ENCODE measurements at regions of chr6 and their contacts with region 1.

Region 1: DNA sequence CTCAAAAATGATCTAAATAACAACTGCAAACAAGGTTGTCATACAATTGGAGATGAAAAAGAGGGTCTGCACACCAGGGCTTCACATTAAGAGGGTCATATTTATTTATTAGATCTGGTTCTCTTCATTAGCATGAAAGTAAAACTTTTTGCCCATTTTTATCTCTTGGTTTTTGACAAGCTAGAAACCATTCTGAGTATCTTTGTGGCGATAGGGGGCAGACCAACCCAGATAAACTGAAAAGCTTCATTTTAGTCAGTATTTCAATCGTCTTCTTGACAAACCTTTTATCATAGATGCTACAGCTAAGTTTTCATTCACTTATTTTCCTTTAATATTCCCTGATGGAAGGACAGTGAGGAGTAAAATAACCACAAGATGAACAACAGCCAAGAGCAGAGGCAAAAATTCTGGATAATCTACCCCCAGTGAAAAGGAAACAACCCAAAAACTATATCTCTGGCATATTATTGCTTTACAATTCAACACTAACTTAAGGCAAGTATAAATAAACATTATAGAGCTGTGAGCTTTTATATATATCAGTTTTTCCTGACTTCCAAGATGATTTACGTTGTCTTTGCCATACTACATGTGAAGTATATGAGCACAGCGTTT is 45.2 kb downstream of the THEMIS start:
- DNase-seq: no peak
- H3K4me3 ChIP-seq: no peak overlapping the region
- H3K27ac ChIP-seq: no peak overlapping the region
- H3K27me3 ChIP-seq: no peaks in the 10 kb centered on the region
- CTCF ChIP-seq: peak; percentile 73

Region 2: DNA sequence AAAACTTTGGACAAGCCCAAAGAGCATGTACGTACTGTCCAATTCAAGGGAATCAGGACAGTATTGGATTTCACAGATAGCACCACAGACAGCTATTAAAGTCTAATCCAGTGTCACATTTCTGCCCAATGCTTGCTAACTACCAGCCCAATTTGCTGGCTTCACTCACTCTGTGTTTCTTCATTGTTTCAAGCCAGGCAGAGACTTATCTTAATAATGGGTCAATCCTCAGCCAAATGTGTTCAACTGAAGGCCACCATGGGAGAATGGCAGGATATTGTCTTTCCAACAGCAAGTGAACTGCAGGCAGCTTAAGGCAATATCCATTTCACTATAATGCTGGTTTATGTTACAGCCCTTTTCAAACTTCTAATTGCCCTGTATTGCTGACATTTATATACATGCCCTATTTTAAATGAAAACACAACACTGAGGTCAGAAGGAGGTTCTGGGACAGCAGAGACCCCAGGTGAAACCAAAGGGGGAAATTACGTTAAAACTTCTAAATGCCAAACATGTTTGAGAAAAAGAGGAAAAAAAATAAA is 879.3 kb before region 1 on chr6:
- CTCF ChIA-PET with region 1: no interaction called
- POLR2A ChIA-PET with region 1: no interaction called
- DNase-seq: no peak
- H3K4me3 ChIP-seq: no peak overlapping the region
- H3K27ac ChIP-seq: no peak overlapping the region
- H3K27me3 ChIP-seq: no peaks in the 10 kb centered on the region
- CTCF ChIP-seq: no peak

Region 3: DNA sequence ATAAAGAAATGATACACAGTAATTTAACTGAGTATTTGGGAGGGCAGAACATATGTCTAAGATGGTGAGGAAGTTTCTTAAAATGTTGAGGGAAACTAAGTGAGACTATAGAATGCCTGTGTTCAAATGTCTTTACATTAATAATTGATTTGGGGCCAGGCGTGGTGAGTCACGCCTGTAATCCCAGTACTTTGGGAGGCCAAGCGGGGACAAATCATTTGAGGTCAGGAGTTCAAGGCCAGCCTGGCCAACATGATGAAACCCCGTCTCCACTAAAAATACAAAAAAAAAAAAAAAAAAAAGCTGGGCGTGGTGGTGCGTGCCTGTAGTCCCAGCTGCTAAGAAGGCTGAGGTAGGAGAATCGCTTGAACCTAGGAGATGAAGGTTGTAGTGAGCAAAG is 21.5 kb before region 1 on chr6:
- CTCF ChIA-PET with region 1: interaction called, 22 read pairs
- POLR2A ChIA-PET with region 1: no interaction called
- DNase-seq: no peak
- H3K4me3 ChIP-seq: no peak overlapping the region
- H3K27ac ChIP-seq: no peak overlapping the region
- H3K27me3 ChIP-seq: no peaks in the 10 kb centered on the region
- CTCF ChIP-seq: no peak

Region 4: DNA sequence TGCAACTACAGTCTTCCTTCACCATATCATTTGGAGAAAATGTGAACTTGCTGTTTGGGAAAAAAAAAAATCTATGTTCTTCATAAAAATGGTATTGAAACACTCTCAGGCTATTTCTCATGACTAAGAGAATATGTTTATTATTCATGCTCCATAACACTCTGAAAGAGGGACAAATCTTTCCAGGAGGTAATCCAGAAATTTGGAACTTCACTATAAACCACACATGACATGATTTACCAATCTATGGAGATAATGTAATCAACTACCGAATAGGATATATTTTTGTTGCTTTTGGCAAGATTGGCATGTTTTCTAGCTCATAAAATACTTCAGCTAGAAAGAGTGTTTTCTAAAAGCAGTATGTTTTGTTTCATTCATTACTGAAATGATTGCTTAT is 11.1 kb before region 1 on chr6:
- CTCF ChIA-PET with region 1: interaction called, 31 read pairs
- POLR2A ChIA-PET with region 1: no interaction called
- DNase-seq: no peak
- H3K4me3 ChIP-seq: no peak overlapping the region
- H3K27ac ChIP-seq: no peak overlapping the region
- H3K27me3 ChIP-seq: no peaks in the 10 kb centered on the region
- CTCF ChIP-seq: no peak

Region 5: GRCh38 chr6:127879685-127880084 is 24.0 kb after region 1 on chr6:
- CTCF ChIA-PET with region 1: interaction called, 10 read pairs
- POLR2A ChIA-PET with region 1: no interaction called
- DNase-seq: no peak
- H3K4me3 ChIP-seq: peak overlapping the region; percentile 11; the same call in 1 of the 2 replicates
- H3K27ac ChIP-seq: no peak overlapping the region
- H3K27me3 ChIP-seq: no peaks in the 10 kb centered on the region
- CTCF ChIP-seq: no peak

Region 6: GRCh38 chr6:128225610-128226009 is 370.0 kb after region 1 on chr6:
- CTCF ChIA-PET with region 1: no interaction called
- POLR2A ChIA-PET with region 1: no interaction called
- DNase-seq: no peak
- H3K4me3 ChIP-seq: no peak overlapping the region
- H3K27ac ChIP-seq: no peak overlapping the region
- H3K27me3 ChIP-seq: no peaks in the 10 kb centered on the region
- CTCF ChIP-seq: no peak

Region 7: DNA sequence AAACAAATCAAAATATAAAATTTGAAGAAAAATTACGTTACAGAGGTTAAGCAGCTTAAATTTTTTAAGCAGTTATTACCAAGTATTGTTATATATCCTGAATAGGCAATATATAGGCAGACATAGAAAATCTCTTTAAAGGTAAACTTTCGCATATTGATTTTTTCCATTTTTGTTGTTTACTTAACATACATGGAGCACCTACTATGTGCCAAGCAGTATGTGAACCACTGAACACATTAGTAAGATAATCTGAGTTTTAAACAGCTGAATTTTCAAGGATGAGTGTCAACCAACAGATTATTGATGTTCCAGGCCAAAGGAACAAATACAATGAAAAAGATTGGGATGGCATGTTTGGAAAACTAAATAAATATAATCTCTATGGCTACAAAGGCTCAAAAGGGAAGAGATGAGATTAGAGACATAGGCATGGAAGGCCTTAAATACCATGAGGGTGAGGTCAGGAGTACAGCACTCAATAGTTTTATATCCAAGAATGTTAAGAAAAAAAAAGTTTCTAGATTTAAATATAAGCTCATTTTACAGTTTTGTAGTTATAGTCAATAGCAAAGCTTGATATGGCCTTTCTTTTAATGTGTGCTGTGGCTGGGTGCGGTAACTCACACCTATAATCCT is 387.2 kb after region 1 on chr6:
- CTCF ChIA-PET with region 1: interaction called, 3 read pairs
- POLR2A ChIA-PET with region 1: interaction called, 19 read pairs
- DNase-seq: peak; percentile 11
- H3K4me3 ChIP-seq: no peak overlapping the region
- H3K27ac ChIP-seq: no peak overlapping the region
- H3K27me3 ChIP-seq: no peaks in the 10 kb centered on the region
- CTCF ChIP-seq: no peak

Region 8: GRCh38 chr6:128516514-128516898 is 660.9 kb after region 1 on chr6:
- CTCF ChIA-PET with region 1: interaction called, 15 read pairs
- POLR2A ChIA-PET with region 1: no interaction called
- DNase-seq: no peak
- H3K4me3 ChIP-seq: peak overlapping the region; percentile 25; the same call in 1 of the 2 replicates
- H3K27ac ChIP-seq: no peak overlapping the region
- H3K27me3 ChIP-seq: no peaks in the 10 kb centered on the region
- CTCF ChIP-seq: peak; percentile 42

Region 9: DNA sequence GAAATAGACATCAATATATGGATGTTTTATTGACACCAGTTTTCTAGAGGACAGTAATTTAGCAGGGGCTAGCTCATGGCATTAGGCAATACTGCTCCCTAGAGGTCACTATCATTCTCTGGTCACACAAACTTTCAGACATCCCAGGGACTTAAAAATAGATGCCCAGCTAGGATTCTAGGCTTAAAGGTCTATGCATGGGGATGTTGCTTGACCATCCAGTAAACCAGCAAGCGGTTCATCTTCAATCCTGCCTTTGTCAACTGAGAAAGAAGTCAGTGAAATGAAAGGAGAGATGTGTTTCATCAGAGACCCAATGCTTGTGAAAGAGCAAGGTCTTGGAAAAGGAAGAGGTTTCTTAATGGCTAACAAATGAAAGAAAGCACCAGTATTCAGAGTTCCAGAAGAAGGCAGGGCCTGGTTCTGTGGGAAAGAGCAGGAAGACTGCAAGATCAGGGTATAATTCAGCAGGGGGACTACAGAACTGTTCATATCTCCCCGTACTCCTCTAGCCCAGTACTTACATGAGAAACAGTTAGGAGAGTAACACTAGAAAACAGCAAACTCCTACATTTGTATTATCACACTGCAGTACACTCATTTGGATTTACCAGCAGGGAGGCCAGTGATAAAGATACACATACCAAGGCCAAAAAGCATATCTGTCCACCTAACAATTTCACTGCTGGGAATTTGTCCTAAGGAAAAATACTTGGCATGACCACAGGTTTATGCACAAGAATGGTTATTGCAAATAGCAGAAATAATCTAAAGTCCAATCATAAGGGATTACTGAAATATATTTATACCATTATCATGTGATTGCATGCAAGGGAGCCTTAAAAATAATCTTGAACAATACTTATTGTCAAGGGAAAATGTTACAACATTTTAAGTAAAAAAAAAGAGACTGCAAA is 875.9 kb after region 1 on chr6:
- CTCF ChIA-PET with region 1: interaction called, 12 read pairs
- POLR2A ChIA-PET with region 1: no interaction called
- DNase-seq: peak; percentile 27
- H3K4me3 ChIP-seq: no peak overlapping the region
- H3K27ac ChIP-seq: no peak overlapping the region
- H3K27me3 ChIP-seq: no peaks in the 10 kb centered on the region
- CTCF ChIP-seq: peak; percentile 71